ENCODE measurements at regions of chr4 and their contacts with region 1.

Region 1: GRCh38 chr4:18278244-18278643 is 256.7 kb upstream of the LCORL start:
- DNase-seq: no peak
- H3K4me3 ChIP-seq: no peak overlapping the region
- H3K27ac ChIP-seq: no peak overlapping the region
- H3K4me1 ChIP-seq: no peaks in the 10 kb centered on the region
- H3K27me3 ChIP-seq: no peaks in the 10 kb centered on the region
- CTCF ChIP-seq: no peak
- POLR2A ChIP-seq: no peak

Region 2: DNA sequence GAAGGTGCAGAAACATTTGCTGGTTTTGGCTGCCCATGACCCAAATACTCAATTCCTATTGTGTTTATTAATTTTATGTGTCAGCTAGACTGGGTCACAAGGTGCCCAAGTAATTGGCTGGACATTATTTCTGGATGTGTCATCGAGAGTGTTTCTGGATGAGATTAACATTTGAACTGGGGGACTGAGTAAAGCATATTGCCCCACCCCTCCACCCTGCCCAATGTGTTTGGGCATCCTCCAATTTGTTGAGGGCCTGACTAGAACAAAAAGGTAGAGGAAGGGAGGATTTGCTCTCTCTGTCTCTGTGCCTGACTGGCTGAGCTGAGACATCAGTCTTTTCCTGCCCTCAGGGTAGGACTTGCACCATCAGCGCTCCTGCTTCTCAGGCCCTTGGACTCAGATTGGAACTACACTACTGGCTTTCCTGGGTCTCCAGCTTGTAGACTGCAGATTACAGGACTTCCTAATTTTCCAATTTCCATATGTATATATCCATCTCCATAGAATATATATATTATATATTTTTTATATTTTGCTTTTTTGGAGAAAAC is 226.9 kb before region 1 on chr4:
- CTCF ChIA-PET with region 1: no interaction called
- POLR2A ChIA-PET with region 1: interaction called, 10 read pairs
- dilution Hi-C with region 1: no loop called
- intact Hi-C with region 1: no loop called
- DNase-seq: no peak
- H3K4me3 ChIP-seq: no peak overlapping the region
- H3K27ac ChIP-seq: no peak overlapping the region
- H3K4me1 ChIP-seq: no peaks in the 10 kb centered on the region
- H3K27me3 ChIP-seq: no peaks in the 10 kb centered on the region
- CTCF ChIP-seq: no peak
- POLR2A ChIP-seq: no peak

Region 3: DNA sequence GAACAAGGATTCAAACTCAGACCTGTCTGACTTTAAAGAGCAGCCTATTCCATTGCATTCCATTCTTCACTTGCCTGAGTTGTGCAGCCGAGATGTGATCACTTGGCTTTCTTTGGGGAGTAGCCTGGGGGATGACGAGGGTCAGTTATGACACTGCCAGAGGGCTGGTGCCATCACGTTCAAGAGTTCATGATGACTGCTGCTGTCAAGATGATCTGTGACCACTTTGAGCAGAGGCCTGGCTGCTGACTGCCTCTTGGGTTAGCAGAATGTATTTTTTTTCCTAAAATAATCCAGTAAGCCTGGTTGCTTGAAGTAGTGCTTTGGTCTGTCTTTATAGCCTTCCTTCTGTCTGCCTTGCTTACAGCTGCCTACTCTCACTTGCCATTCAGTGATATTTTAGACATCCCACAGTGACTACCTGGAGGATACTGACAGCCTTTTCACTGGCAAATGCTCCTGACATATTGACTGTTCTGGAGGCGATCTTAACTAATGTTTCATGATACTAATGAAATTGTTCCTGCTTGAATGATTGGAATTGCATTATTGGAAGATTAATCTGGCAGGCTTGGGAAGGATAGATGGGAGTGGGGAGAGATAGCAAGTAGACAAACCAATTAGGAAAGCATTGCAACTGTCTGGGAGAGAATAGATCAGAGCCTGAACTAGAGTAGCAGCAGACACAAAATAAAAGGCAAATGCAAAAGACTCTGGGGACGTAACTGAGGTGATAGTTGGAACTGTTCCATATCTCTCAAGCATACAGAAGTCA is 35.1 kb before region 1 on chr4:
- CTCF ChIA-PET with region 1: no interaction called
- POLR2A ChIA-PET with region 1: no interaction called
- dilution Hi-C with region 1: no loop called
- intact Hi-C with region 1: loop called (anchors 5 kb)
- DNase-seq: no peak
- H3K4me3 ChIP-seq: no peak overlapping the region
- H3K27ac ChIP-seq: no peak overlapping the region
- H3K4me1 ChIP-seq: no peaks in the 10 kb centered on the region
- H3K27me3 ChIP-seq: no peaks in the 10 kb centered on the region
- CTCF ChIP-seq: no peak
- POLR2A ChIP-seq: no peak

Region 4: GRCh38 chr4:18369561-18369960 is 91.3 kb after region 1 on chr4:
- CTCF ChIA-PET with region 1: no interaction called
- POLR2A ChIA-PET with region 1: no interaction called
- dilution Hi-C with region 1: no loop called
- intact Hi-C with region 1: no loop called
- DNase-seq: no peak
- H3K4me3 ChIP-seq: no peak overlapping the region
- H3K27ac ChIP-seq: no peak overlapping the region
- H3K4me1 ChIP-seq: no peaks in the 10 kb centered on the region
- H3K27me3 ChIP-seq: no peaks in the 10 kb centered on the region
- CTCF ChIP-seq: no peak
- POLR2A ChIP-seq: no peak

Measured in endothelial cell of umbilical vein (primary cell).